ENCODE measurements at regions of chr4 and their contacts with region 1.

Region 1: GRCh38 chr4:160563552-160564282 is 1460.8 kb downstream of the RAPGEF2 start:
- DNase-seq: no peak
- H3K4me3 Mint-ChIP-seq: no peak overlapping the region
- H3K27ac Mint-ChIP-seq: no peak overlapping the region
- H3K4me1 Mint-ChIP-seq: no peaks in the 10 kb centered on the region
- H3K27me3 Mint-ChIP-seq: no peaks in the 10 kb centered on the region

Region 2: GRCh38 chr4:162201673-162202072 is 1638.0 kb after region 1 on chr4:
- CTCF ChIA-PET with region 1: no interaction called
- POLR2A ChIA-PET with region 1: no interaction called
- intact Hi-C with region 1: loop called (anchors 10 kb)
- DNase-seq: no peak
- H3K4me3 Mint-ChIP-seq: no peak overlapping the region
- H3K27ac Mint-ChIP-seq: no peak overlapping the region
- H3K4me1 Mint-ChIP-seq: no peaks in the 10 kb centered on the region
- H3K27me3 Mint-ChIP-seq: no peaks in the 10 kb centered on the region